GM23248 (cell line): ENCODE measurements at regions of chr6 and their contacts with region 1.

Region 1: GRCh38 chr6:52664186-52664990 is 6.5 kb upstream of the TMEM14A start:
- DNase-seq: peak; percentile 96
- H3K4me3 ChIP-seq: peak overlapping the region; percentile 91
- H3K27ac ChIP-seq: 0 out of 2 replicates have a peak overlapping the region, but pooled peaks have one; percentile 7
- H3K4me1 ChIP-seq: peaks cover 28% of the 10 kb centered on the region
- H3K27me3 ChIP-seq: no peaks in the 10 kb centered on the region

Region 2: GRCh38 chr6:52407467-52407866 is 256.9 kb before region 1 on chr6:
- in situ Hi-C with region 1: loop called (anchors 5 kb)
- DNase-seq: peak; percentile 79
- H3K4me3 ChIP-seq: no peak overlapping the region
- H3K27ac ChIP-seq: no peak overlapping the region
- H3K4me1 ChIP-seq: peaks cover 12% of the 10 kb centered on the region
- H3K27me3 ChIP-seq: no peaks in the 10 kb centered on the region

Region 3: GRCh38 chr6:52551401-52552277 is 112.7 kb before region 1 on chr6:
- in situ Hi-C with region 1: no loop called
- DNase-seq: peak; percentile 86
- H3K4me3 ChIP-seq: peak overlapping the region; percentile 6; the same call in 1 of the 2 replicates
- H3K27ac ChIP-seq: peak overlapping the region; percentile 74
- H3K4me1 ChIP-seq: peaks cover 94% of the 10 kb centered on the region
- H3K27me3 ChIP-seq: no peaks in the 10 kb centered on the region